GM10248 (cell line): ENCODE measurements at regions of chr1 and their contacts with region 1.

Region 1: DNA sequence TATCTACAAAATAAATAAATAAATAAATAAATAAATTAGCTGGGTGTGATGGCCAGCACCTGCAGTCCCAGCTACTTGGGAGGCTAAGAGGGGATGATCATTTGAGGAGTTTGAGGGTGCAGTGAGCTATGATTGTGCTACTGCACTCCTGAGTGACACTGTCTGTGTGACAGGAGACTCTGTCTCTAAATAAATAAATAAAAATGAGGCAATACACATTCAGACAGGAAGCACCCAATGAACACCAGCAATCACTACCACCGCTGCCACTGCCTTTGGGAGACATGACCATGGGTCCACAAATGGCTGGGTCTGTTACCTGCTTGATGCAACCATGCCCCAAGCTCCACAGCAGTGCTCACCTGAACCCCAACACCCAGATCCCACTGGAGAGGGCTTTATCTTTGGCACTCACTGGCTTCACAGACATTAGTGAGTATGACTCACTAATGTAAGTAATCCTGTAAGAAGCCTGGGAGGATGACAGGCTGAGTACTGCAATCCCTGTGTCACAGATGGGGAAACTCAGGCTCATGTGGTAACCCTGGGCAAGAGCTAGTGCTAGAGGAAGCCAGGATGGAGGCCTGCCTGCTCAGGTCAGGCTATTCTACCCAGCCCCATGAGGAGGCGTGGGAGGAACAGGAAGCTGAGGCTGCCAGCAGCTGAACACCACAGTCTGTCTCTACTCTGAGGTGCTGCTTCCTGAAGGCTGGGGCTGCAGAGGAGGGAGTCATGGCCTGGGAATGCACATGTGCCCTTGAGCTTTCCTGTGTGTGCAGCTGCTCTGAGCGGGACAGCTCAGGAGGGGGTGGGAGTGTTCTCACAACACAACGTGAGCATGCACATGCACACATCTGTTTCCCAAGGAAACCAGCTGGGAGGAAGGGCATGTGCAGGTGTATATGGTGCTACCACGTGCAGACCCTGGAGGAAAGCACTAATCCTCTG is 43.0 kb downstream of the SLC9A1 start:
- DNase-seq: peak; percentile 87
- CTCF ChIP-seq: peak; percentile 52

Region 2: DNA sequence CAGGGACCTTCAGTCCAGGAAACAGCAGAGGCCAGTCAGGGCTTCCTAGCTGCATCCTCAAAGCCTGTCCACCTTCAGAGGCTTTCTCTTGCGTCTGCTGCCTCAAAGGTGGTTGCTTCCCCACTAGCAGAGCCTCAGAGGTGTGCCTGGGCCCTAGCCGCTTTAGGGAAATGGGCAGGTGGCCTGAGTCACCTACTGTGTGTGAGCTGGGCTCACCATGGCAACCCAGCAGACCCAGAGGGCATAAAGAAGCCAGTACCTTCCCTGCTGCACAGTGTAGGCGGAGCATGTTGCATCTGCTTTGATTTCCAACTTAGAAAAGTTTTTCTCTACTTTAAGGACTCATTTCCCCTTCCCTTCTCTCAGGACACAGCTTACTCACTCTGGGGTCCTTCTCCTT is 30.6 kb after region 1 on chr1:
- CTCF ChIA-PET with region 1: interaction called, 17 read pairs
- POLR2A ChIA-PET with region 1: no interaction called
- DNase-seq: no peak
- CTCF ChIP-seq: no peak